ENCODE measurements at regions of chr17 and their contacts with region 1.

Region 1: GRCh38 chr17:76182016-76182764 is 41.1 kb upstream of the FOXJ1 start:
- DNase-seq: peak; percentile 95
- ATAC-seq: peak; percentile 96
- H3K4me3 ChIP-seq: no peak overlapping the region
- H3K4me3 Mint-ChIP-seq: peak overlapping the region; percentile 1
- H3K27ac ChIP-seq: no peak overlapping the region
- H3K27ac Mint-ChIP-seq: peak overlapping the region; percentile 74
- H3K4me1 ChIP-seq: peaks cover 10 to 11% of the 10 kb centered on the region in 2 donors
- H3K4me1 Mint-ChIP-seq: peaks cover 20% of the 10 kb centered on the region
- H3K27me3 ChIP-seq: no peaks in the 10 kb centered on the region
- H3K27me3 Mint-ChIP-seq: no peaks in the 10 kb centered on the region
- CTCF ChIP-seq: peak; percentile 89

Region 2: DNA sequence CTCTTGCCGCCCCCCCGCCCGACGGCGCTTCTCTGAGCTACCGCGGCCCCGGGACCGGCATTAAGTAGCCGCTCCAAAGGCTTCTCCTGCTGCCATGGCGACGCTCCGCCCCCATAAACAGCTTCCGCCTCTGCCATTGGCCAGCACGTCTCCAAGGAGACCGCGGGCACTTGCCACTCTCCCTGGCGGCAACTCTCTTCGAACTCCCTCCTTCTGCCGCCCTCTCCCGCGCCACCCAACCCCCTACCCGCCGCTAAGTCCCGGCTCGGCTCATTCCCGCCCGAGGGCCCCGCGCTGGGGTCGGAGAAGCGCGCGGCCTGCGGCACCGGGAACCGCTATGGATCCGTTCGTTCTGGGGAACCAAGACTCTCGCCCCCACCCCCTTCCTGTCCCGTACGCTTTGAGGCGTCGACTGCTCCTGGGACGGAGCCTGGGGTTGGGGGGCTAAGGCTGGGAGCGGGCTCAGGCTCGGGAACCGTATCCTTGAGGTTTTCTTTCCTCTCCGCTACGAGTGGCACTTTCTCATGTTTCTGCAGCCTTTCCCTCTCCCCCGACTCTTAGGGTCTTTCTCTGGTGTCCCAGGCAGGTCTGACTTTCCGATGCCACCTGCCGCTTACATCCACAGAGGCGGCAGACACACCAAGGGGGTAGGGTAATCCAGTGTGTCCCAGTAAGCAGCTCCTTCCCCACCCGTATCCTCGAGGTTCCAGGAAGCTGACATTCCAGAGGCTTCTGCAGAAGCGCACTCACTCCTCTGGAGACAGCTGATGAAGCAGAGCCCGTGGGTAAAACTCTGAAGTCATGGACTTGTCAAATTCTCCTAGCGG is 40.8 kb before region 1 on chr17 and contains the start of gene FOXJ1:
- CTCF ChIA-PET with region 1: interaction called, 18 read pairs
- POLR2A ChIA-PET with region 1: no interaction called
- intact Hi-C with region 1: loop called (anchors 5 kb)
- DNase-seq: peak; percentile 95
- ATAC-seq: peak; percentile 73
- H3K4me3 ChIP-seq: peak within 1 kb of the TSS in 4 of 5 experiments; percentile 55 to 81 (median 58)
- H3K4me3 Mint-ChIP-seq: peak within 1 kb of the TSS; percentile 90
- H3K27ac ChIP-seq: no peak within 1 kb of the TSS
- H3K27ac Mint-ChIP-seq: peak within 1 kb of the TSS; percentile 75
- H3K4me1 ChIP-seq: peaks cover 54 to 63% of the 10 kb centered on the region in 2 donors
- H3K4me1 Mint-ChIP-seq: peaks cover 54% of the 10 kb centered on the region
- H3K27me3 ChIP-seq: peaks cover 0 to 43% (median 11%) of the 10 kb centered on the region in 4 experiments
- H3K27me3 Mint-ChIP-seq: peaks cover 14% of the 10 kb centered on the region
- CTCF ChIP-seq: no peak
- total RNA-seq, gene FOXJ1: 0.12 and 0.20 TPM in 2 replicates

Region 3: GRCh38 chr17:76388966-76389888 is 207.0 kb after region 1 on chr17:
- CTCF ChIA-PET with region 1: no interaction called
- POLR2A ChIA-PET with region 1: no interaction called
- intact Hi-C with region 1: no loop called
- DNase-seq: no peak
- ATAC-seq: no peak
- H3K4me3 ChIP-seq: no peak overlapping the region
- H3K4me3 Mint-ChIP-seq: no peak overlapping the region
- H3K27ac ChIP-seq: no peak overlapping the region
- H3K27ac Mint-ChIP-seq: no peak overlapping the region
- H3K4me1 ChIP-seq: peaks cover 13 to 15% of the 10 kb centered on the region in 2 donors
- H3K4me1 Mint-ChIP-seq: peaks cover 9% of the 10 kb centered on the region
- H3K27me3 ChIP-seq: peaks cover 0 to 9% (median 4%) of the 10 kb centered on the region in 4 experiments
- H3K27me3 Mint-ChIP-seq: no peaks in the 10 kb centered on the region
- CTCF ChIP-seq: no peak

Measured in B cell (primary cell).